ENCODE measurements at regions of chrX and their contacts with region 1.

Region 1: DNA sequence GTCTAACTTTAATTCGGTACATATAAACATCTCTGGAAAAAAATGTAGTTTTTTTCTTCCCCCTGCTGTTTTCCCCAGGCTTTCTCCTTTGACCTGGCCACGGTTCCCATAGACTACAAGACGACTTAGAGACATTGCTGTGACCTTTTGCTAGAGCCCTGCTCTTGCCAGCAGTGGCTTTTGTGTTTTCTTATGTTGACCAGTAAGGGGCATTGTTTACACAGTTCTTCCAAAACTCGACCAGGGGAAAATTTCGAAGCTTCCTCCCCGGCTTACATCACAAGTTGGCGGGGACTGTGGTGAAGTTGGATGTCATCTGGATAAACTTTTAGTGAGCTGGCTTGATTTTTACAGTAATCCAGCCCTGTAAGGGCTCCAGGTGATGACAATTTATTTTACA is 9.3 kb downstream of the CCDC160 start:
- DNase-seq: peak in 2 of 4 experiments; percentile 11 to 26
- ATAC-seq: peak; percentile 72
- H3K4me3 ChIP-seq: no peak overlapping the region
- H3K27ac ChIP-seq: no peak overlapping the region
- H3K4me1 ChIP-seq: no peaks in the 10 kb centered on the region
- H3K27me3 ChIP-seq: no peaks in the 10 kb centered on the region
- CTCF ChIP-seq: peak; percentile 7 to 39 (median 26); a peak in 3 of 6 replicates
- EP300 ChIP-seq: no peak
- POLR2A ChIP-seq: no peak
- RAD21 ChIP-seq: peak; percentile 48 to 50; a peak in 3 of 4 replicates

Region 2: GRCh38 chrX:134396174-134396573 is 149.9 kb after region 1 on chrX:
- CTCF ChIA-PET with region 1: no interaction called
- POLR2A ChIA-PET with region 1: no interaction called
- in situ Hi-C with region 1: no loop called
- intact Hi-C with region 1: loop called (anchors 2 kb)
- DNase-seq: peak in 2 of 4 experiments; percentile 12 to 14
- ATAC-seq: peak; percentile 56; the same call in 2 of the 3 replicates
- H3K4me3 ChIP-seq: no peak overlapping the region
- H3K27ac ChIP-seq: no peak overlapping the region
- H3K4me1 ChIP-seq: no peaks in the 10 kb centered on the region
- H3K27me3 ChIP-seq: no peaks in the 10 kb centered on the region
- CTCF ChIP-seq: peak; percentile 42 to 72 (median 46); a peak in 4 of 6 replicates
- EP300 ChIP-seq: no peak
- POLR2A ChIP-seq: no peak
- RAD21 ChIP-seq: peak; percentile 58 to 77; a peak in 3 of 4 replicates

Measured in K562 (cell line).